ENCODE measurements at regions of chr20 and their contacts with region 1.

Region 1: GRCh38 chr20:2663887-2664719 is at the start of gene IDH3B:
- DNase-seq: peak; percentile 90
- ATAC-seq: peak; percentile 91
- H3K4me3 ChIP-seq: peak within 1 kb of the TSS; percentile 98
- H3K27ac ChIP-seq: peak within 1 kb of the TSS; percentile 69
- H3K4me1 ChIP-seq: peaks cover 12% of the 10 kb centered on the region
- H3K27me3 ChIP-seq: 0 out of 2 replicates have a peak, but pooled peaks cover 4% of the 10 kb centered on the region
- CTCF ChIP-seq: no peak
- total RNA-seq, gene IDH3B: 261 and 269 TPM in 2 replicates

Region 2: DNA sequence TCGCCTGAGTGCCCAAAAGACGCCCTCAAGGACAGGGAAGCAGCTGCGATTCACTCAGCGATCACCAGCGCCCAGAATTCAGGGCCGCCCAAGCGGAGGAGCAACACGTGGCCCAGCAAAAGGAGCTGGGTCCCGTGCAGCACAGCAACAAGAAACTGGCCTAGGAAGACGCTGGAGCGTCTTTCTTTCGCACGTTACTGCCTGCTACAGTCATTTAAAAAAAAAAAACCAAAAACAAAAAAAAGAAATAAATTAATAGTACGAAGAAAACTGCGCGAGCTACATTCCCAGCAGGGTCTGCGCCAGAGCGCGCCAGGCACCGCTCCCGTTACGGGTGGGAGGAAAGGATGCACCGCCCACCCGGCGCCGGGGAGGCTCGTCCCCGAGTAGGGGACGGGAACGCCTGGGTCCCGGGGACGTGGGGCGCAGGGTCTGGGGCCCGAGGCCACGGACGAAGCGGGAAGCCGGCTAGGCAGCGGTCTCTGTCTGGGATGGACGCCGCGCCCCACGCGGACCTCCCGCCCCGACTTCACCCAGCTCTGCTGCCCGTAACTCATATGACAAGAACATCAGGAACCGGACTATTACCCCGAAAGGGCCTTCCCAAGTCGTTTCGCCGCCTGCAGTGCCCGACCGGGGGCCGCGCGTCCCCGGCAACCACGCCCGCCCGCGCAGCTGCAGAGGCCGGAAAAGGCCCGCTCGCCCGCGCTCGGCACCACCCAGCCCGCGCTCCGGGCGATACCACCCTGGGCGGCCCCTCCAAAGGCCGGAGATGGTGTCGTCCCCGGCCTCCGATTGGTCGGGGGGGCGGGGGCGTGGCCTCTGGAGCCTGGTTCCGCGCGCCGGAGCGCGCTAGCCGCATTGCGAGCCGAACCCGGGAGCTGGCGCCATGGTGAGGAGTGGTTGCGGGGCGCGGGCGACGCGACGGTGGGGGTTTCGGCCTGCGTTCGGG is 12.1 kb before region 1 on chr20 and contains the start of gene NOP56:
- CTCF ChIA-PET with region 1: no interaction called
- POLR2A ChIA-PET with region 1: interaction called, 7 read pairs
- intact Hi-C with region 1: loop called (anchors 1 kb)
- DNase-seq: peak; percentile 94
- ATAC-seq: peak; percentile 92
- H3K4me3 ChIP-seq: peak within 1 kb of the TSS; percentile 97
- H3K27ac ChIP-seq: peak within 1 kb of the TSS; percentile 80
- H3K4me1 ChIP-seq: peaks cover 25% of the 10 kb centered on the region
- H3K27me3 ChIP-seq: no peaks in the 10 kb centered on the region
- CTCF ChIP-seq: no peak
- total RNA-seq, gene NOP56: 570 and 642 TPM in 2 replicates